ENCODE measurements at regions of chr15 and their contacts with region 1.

Region 1: DNA sequence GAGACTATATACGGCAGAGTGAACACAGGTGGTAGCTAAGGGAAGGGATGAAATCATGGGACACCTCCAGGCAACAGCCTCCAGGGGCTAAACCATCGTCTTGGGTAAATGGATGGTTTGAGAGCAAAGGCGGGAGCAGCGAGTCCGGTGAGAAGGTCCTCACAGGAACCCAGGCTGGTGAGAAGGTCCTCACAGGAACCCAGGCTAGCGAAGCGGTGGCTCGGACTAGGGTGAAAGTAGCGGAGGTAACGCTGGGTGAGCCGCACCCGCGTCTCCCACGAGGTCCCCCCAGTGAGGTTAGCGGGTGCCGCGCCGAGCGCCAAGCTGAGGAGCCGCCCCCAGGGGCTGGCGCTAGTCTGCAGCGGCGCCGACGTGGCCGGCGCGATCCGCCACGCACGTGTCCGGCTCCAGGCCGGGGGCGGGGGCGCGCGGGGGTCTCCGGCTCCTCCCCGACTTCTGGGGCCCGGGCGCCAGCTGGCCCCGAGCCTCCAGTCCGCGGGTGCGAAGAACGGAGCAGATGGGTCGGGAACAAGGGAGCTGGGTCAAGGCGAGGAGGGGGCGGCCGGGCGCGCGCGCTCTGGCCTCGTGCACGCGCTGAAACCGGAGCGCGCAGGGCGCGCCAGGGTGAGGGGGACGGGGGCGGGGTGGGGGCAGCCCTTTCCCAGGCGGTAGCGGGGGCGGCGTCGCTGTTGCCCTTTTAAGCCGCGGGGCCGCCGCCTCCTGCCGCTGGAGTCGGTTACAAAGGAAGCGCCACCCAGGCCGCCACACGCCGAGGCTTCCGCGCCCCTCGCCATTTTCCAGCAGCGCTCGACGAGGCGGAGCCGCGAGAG is at the start of gene UBE2Q2:
- DNase-seq: peak; percentile 80
- H3K4me3 Mint-ChIP-seq: peak within 1 kb of the TSS; percentile 89
- H3K27ac Mint-ChIP-seq: peak within 1 kb of the TSS; percentile 86
- H3K4me1 Mint-ChIP-seq: peaks cover 35% of the 10 kb centered on the region
- H3K27me3 Mint-ChIP-seq: peaks cover 3% of the 10 kb centered on the region
- total RNA-seq, gene UBE2Q2: 19.7 to 19.8 TPM

Region 2: GRCh38 chr15:75584121-75584520 is 258.8 kb before region 1 on chr15:
- CTCF ChIA-PET with region 1: no interaction called
- POLR2A ChIA-PET with region 1: no interaction called
- intact Hi-C with region 1: no loop called
- DNase-seq: no peak
- H3K4me3 Mint-ChIP-seq: no peak overlapping the region
- H3K27ac Mint-ChIP-seq: no peak overlapping the region
- H3K4me1 Mint-ChIP-seq: peaks cover 7% of the 10 kb centered on the region
- H3K27me3 Mint-ChIP-seq: no peaks in the 10 kb centered on the region

Region 3: DNA sequence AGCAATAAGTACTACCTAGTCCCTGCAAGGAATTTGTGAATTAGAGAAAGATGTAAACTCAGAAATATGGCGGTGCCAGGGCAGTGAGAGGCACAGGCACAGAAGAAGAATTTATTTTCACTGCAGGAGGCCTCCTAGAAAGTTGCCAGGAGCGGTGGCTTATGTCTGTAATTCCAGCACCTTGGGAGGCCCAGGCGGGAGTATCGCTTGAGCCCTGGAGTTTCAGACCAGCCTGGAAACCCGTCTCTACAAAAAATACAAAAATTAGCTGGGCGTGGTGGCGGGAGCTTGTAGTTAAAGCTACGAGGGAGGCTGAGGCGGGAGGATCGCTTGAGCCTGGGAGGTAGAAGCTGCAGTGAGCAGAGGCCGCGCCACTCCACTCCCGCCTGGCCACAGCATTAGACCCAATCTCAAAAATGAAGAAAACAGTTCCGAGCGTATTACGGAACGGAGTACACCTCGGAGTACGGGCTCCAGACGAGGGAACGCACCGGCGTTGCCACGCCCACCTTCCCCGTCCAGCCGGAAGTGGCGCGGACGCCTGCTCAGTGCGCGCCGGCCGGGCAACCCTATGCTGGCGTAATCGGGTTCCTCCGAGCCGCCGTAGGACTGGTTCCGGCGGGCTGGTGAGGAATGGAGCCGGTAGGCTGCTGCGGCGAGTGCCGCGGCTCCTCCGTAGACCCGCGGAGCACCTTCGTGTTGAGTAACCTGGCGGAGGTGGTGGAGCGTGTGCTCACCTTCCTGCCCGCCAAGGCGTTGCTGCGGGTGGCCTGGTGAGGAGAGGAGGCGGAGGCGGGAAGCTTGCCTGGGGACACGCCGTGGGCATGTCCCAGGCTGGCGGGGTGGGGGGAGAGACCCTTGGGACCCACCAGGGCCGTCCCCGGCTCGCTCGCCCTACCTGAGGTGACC is 60.6 kb after region 1 on chr15 and contains the start of gene FBXO22:
- CTCF ChIA-PET with region 1: interaction called, 3 read pairs
- POLR2A ChIA-PET with region 1: interaction called, 8 read pairs
- intact Hi-C with region 1: loop called (anchors 1 kb)
- DNase-seq: peak; percentile 95
- H3K4me3 Mint-ChIP-seq: peak within 1 kb of the TSS; percentile 100
- H3K27ac Mint-ChIP-seq: peak within 1 kb of the TSS; percentile 96
- H3K4me1 Mint-ChIP-seq: peaks cover 39% of the 10 kb centered on the region
- H3K27me3 Mint-ChIP-seq: no peaks in the 10 kb centered on the region
- total RNA-seq, gene FBXO22: 66.7 to 67.4 TPM

Region 4: DNA sequence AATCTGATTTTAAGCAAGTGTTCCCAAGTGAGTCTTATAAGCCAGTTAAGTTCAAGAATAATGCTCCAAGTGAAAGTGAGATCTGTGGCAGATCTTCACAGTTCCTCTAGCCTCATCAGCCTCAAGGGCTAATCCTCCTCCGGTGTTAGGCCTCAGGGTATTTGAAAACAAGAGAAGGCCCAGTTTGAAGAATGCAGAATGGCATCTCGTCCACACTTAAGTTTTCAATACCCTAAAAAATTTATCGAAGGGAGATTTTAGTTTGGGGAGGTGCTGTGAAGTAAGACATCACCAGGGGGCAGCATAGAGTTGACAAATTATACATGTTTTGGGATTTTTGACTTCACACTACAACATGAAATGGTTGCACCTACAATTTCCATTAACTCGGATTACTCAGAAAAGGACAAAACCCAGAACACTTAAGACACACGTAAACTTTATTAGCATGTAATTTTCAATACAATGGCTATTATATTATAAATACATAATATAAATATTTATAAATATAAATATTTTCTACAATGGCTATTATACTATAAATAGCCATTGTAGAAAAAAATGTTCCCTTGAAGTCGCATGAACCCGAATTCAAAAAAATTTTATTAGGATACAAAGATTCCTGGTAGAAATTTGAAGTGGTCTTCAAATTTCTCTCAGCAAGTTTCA is 214.5 kb after region 1 on chr15:
- CTCF ChIA-PET with region 1: no interaction called
- POLR2A ChIA-PET with region 1: no interaction called
- intact Hi-C with region 1: loop called (anchors 10 kb)
- DNase-seq: peak; percentile 45
- H3K4me3 Mint-ChIP-seq: no peak overlapping the region
- H3K27ac Mint-ChIP-seq: no peak overlapping the region
- H3K4me1 Mint-ChIP-seq: peaks cover 19% of the 10 kb centered on the region
- H3K27me3 Mint-ChIP-seq: peaks cover 44% of the 10 kb centered on the region

Measured in activated CD4-positive, alpha-beta memory T cell treated with anti-CD3 and anti-CD28 coated beads for 36 hours (primary cell).